ENCODE measurements at regions of chr20 and their contacts with region 1.

Region 1: GRCh38 chr20:17682103-17682888 is at the start of gene RRBP1:
- DNase-seq: peak; percentile 98
- ATAC-seq: peak; percentile 90
- H3K4me3 ChIP-seq: peak within 1 kb of the TSS; percentile 87 to 92 (median 92)
- H3K27ac ChIP-seq: peak within 1 kb of the TSS; percentile 87
- H3K4me1 ChIP-seq: peaks cover 59% of the 10 kb centered on the region
- H3K27me3 ChIP-seq: peaks cover 0 to 18% of the 10 kb centered on the region in 2 experiments; a peak in 4 of 5 replicates
- CTCF ChIP-seq: peak; percentile 89
- EP300 ChIP-seq: peak; percentile 51 to 93
- POLR2A ChIP-seq: peak; percentile 98 to 99
- RAD21 ChIP-seq: peak; percentile 92
- total RNA-seq, gene RRBP1: 97.1 and 222 TPM in 2 replicates

Region 2: DNA sequence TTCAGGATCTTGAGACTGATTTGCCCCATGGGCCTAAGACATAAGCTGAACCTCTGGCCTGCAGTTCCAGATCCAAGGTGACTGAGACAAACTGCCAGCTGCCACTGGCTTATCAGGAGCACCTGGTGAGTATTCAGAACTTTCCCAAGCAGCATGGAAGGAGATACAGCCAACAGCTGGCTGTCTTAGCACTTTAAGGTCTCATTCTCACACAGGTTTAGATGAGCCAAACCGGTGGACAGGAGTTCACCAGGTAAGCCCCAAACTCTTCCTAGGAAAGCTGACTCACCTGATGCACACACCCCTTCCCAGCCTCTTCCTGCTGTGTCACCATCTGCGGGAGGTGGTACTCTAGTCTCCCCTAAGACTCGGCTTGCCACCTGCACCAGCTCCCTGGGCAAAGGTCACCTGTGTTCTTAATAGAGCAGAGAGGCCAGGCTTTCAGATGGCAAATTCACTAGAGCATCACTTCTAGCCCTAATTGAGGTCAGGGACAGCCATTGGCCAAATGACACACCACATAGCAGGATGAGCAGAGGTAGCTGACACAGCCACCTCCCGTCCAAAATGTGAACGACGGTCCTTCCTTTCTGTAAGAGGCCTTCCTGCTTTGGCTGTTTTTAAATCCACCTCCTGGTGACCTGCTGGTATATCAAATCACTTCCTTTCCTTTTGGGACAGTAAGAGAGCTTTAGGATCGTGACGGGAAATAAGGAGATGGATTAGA is 17.8 kb after region 1 on chr20 and contains the start of gene BANF2:
- CTCF ChIA-PET with region 1: no interaction called
- POLR2A ChIA-PET with region 1: interaction called, 11 read pairs
- in situ Hi-C with region 1: no loop called
- intact Hi-C with region 1: no loop called
- DNase-seq: no peak
- ATAC-seq: peak; percentile 24; the same call in 1 of the 3 replicates
- H3K4me3 ChIP-seq: no peak within 1 kb of the TSS
- H3K27ac ChIP-seq: no peak within 1 kb of the TSS
- H3K4me1 ChIP-seq: peaks cover 20% of the 10 kb centered on the region
- H3K27me3 ChIP-seq: peaks cover 14 to 64% of the 10 kb centered on the region in 2 experiments
- CTCF ChIP-seq: 0 out of 2 replicates have a peak, but pooled peaks have one; percentile 9
- EP300 ChIP-seq: no peak
- POLR2A ChIP-seq: no peak
- RAD21 ChIP-seq: no peak
- total RNA-seq, gene BANF2: 0.35 TPM in 1 of 2 replicates, not detected in the other

Region 3: DNA sequence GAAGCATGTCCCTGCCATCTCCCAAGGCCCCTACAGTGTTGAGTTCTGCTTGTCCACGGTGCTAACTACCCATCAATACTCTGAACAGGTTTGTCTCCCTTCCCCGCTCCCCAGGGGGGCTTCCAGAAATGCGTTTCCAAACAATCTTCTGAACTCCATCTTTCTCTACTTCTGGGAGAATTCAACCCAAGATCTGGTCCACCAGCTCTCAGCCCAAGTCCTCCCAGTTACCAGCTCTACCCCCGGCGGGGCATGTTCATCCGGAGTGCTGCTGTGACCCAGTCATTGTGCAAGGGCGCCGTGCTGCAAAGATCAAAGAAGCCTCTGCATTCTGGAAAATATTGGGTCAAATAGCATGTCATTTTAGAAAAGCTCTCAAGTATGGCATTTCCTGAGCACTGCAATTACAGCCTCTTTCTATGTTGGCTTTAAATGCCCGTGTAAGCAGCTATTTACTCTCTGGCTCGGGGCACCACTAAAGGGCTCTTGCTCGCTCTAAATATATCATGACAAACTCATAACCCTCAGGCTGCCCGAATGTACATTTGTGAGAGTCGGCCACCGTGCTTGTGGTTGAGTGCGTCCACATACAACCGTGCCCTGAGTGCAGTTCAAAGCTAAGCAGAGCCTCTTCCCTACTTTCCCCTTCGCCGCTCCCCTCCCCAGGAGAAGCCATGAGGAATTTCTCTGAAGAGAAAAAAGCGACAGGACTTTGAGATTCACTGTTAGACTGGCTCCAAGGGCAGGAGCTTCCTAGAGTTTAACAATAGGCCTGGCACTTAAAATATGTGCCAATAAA is 89.1 kb after region 1 on chr20:
- CTCF ChIA-PET with region 1: no interaction called
- POLR2A ChIA-PET with region 1: interaction called, 34 read pairs
- in situ Hi-C with region 1: no loop called
- intact Hi-C with region 1: loop called (anchors 1 kb)
- DNase-seq: peak; percentile 97
- ATAC-seq: peak; percentile 93
- H3K4me3 ChIP-seq: peak overlapping the region; percentile 26 to 59 (median 39)
- H3K27ac ChIP-seq: peak overlapping the region; percentile 79
- H3K4me1 ChIP-seq: peaks cover 39% of the 10 kb centered on the region
- H3K27me3 ChIP-seq: no peaks in the 10 kb centered on the region
- CTCF ChIP-seq: no peak
- EP300 ChIP-seq: peak; percentile 48 to 86; a peak in 1 of 4 replicates
- POLR2A ChIP-seq: peak in 1 of 2 experiments; percentile 52; a peak in 2 of 4 replicates
- RAD21 ChIP-seq: peak; percentile 22; the same call in 1 of the 2 replicates

Region 4: DNA sequence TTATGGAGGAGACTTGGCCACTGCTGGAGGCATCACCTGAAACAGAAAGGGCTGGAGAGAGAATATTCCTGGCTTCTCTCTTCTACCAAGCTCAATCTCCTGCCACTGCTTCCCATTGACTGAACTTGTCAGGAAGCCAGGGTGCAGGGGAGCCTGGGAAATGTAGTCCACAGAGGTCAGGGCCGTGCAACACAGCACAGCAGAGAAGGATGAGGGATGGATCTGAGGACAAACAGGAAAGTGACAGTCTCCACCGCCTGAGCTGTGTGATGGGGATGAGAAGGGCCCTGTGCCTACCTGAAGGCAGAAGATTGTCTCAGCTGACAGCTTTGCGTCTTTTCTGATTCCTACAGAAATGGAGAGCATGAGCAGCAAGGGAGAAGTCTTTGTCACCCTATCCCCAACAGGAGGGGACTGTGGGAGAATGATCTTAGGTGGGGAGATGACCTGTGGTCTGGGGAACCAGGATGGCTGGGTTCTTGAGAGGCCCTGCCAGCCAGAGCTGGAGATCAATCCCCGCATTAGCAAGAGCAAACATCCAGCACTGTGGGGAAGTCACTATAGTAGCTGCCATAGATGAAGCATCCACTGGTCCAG is 172.1 kb after region 1 on chr20:
- CTCF ChIA-PET with region 1: no interaction called
- POLR2A ChIA-PET with region 1: interaction called, 347 read pairs
- in situ Hi-C with region 1: no loop called
- intact Hi-C with region 1: loop called (anchors 1 kb)
- DNase-seq: peak; percentile 82
- ATAC-seq: peak; percentile 58
- H3K4me3 ChIP-seq: peak overlapping the region in 2 of 3 experiments; percentile 6 to 38; a peak in 2 of 6 replicates
- H3K27ac ChIP-seq: peak overlapping the region; percentile 21
- H3K4me1 ChIP-seq: peaks cover 76% of the 10 kb centered on the region
- H3K27me3 ChIP-seq: no peaks in the 10 kb centered on the region
- CTCF ChIP-seq: no peak
- EP300 ChIP-seq: 0 out of 4 replicates have a peak, but pooled peaks of 1 of the 2 experiments have one; percentile 21
- POLR2A ChIP-seq: no peak
- RAD21 ChIP-seq: peak; percentile 52

Region 5: GRCh38 chr20:17885544-17885943 is 203.2 kb after region 1 on chr20:
- CTCF ChIA-PET with region 1: no interaction called
- POLR2A ChIA-PET with region 1: interaction called, 25 read pairs
- in situ Hi-C with region 1: loop called (anchors 5 kb)
- intact Hi-C with region 1: loop called (anchors 1 kb)
- DNase-seq: no peak
- ATAC-seq: no peak
- H3K4me3 ChIP-seq: no peak overlapping the region
- H3K27ac ChIP-seq: no peak overlapping the region
- H3K4me1 ChIP-seq: peaks cover 83% of the 10 kb centered on the region
- H3K27me3 ChIP-seq: no peaks in the 10 kb centered on the region
- CTCF ChIP-seq: no peak
- EP300 ChIP-seq: no peak
- POLR2A ChIP-seq: no peak
- RAD21 ChIP-seq: no peak

Region 6: DNA sequence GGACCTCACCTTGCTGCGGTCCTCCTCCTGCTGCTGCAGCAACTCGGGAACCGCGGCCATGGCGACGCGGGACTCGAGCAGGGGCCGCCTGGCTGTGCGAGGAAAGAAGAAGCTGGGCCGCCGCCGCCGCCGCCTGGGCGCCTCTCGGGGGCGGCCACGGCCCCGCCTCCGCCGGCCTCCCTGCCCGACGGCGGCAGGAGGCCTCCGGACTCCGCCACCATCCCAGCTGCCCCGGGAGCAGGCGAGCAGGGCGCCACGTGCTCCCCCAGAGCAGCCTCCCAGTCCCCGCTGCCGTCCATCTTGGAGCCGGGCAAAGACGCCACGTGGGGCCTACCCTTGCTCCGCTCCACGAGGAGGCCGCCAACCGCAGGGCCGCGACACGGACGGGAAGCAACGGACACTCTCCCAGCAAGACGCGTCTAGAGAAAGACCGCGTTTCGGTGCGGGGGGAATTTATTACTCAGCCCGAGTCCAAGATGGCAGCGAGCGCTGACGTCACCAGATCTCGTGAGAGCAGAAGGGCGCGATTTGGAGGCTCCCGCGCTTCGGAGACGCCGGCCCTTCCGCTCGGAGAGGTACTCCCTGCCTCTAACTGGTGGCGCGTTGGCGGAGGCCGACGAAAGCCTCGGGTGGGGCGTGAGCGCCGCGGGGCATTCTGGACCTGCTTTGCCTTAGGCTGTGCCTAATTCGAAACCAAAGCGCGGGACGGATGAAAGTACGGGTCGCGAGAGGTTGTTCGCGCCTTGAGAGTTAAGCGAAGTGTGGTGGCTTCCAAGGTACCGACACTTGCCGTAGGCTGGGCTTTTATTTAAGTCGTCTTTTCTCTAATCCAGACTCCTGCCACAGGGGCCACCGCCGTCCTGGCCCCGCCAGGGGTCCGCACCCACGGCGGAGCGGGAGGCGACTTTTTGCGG is 286.3 kb after region 1 on chr20 and contains the starts of genes MGME1 and SNX5:
- CTCF ChIA-PET with region 1: no interaction called
- POLR2A ChIA-PET with region 1: interaction called, 15 read pairs
- in situ Hi-C with region 1: no loop called
- intact Hi-C with region 1: no loop called
- DNase-seq: peak; percentile 100
- ATAC-seq: peak; percentile 93
- H3K4me3 ChIP-seq: peak within 1 kb of the TSS; percentile 89 to 95 (median 89)
- H3K27ac ChIP-seq: peak within 1 kb of the TSS; percentile 97
- H3K4me1 ChIP-seq: peaks cover 52% of the 10 kb centered on the region
- H3K27me3 ChIP-seq: no peaks in the 10 kb centered on the region; a peak in 1 of 5 replicates
- CTCF ChIP-seq: peak; percentile 23
- EP300 ChIP-seq: peak; percentile 69 to 84; a peak in 3 of 4 replicates
- POLR2A ChIP-seq: peak; percentile 100
- RAD21 ChIP-seq: peak; percentile 74
- total RNA-seq, gene MGME1: 66.6 and 79.5 TPM in 2 replicates
- total RNA-seq, gene SNX5: 1,040 and 1,306 TPM in 2 replicates

Measured in HepG2 (cell line).